MCF 10A (cell line): ENCODE measurements at regions of chr10 and their contacts with region 1.

Region 1: DNA sequence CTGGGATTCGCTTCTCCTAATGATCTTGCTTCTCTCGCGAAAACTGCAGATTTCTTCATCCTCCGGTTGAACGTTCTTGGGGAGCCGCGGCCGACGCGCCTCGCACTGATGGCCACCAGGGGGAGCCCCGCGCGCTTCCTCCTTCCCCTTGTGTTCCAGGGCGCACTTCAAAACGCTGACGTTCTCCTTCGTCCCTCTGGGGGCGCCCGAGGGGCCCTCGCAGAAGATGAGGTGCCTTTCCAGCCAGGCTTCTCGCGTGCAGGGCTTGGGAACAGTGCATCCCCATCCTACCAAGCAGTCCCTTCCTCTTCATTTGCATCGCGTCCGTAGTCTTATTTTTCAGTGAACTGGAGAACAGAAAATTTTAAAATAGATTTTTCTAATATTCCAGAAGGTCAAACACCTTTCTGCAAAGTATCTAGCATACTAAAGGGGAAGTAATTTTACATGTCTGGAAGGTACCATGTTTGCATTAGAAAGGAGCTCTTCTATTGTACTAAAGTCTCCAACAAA is 22.5 kb downstream of the GSTO2 start:
- DNase-seq: peak; percentile 89
- H3K4me3 Mint-ChIP-seq: no peak overlapping the region
- H3K27ac Mint-ChIP-seq: no peak overlapping the region
- H3K4me1 Mint-ChIP-seq: peaks cover 4% of the 10 kb centered on the region
- H3K27me3 Mint-ChIP-seq: no peaks in the 10 kb centered on the region
- CTCF ChIP-seq: peak; percentile 98

Region 2: DNA sequence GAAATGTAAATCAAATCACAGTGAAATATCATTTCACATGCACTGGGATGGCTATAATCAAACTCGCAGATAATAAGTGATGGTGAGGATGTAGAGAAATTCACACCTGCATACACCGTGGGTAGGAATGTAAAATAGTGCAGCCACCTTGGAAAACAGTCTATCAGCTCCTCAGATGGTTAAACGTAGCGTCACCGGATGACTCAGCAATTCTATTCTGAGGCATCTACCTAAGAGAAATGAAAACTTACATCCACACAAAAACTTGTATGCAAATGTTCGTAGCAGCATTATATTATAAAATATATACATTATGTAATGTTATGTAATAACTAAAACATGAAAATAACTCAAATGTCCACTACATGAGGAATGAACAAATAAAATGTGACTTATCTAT is 475.1 kb before region 1 on chr10:
- CTCF ChIA-PET with region 1: no interaction called
- POLR2A ChIA-PET with region 1: no interaction called
- intact Hi-C with region 1: no loop called
- DNase-seq: peak; percentile 51
- H3K4me3 Mint-ChIP-seq: no peak overlapping the region
- H3K27ac Mint-ChIP-seq: no peak overlapping the region
- H3K4me1 Mint-ChIP-seq: no peaks in the 10 kb centered on the region
- H3K27me3 Mint-ChIP-seq: no peaks in the 10 kb centered on the region
- CTCF ChIP-seq: no peak

Region 3: DNA sequence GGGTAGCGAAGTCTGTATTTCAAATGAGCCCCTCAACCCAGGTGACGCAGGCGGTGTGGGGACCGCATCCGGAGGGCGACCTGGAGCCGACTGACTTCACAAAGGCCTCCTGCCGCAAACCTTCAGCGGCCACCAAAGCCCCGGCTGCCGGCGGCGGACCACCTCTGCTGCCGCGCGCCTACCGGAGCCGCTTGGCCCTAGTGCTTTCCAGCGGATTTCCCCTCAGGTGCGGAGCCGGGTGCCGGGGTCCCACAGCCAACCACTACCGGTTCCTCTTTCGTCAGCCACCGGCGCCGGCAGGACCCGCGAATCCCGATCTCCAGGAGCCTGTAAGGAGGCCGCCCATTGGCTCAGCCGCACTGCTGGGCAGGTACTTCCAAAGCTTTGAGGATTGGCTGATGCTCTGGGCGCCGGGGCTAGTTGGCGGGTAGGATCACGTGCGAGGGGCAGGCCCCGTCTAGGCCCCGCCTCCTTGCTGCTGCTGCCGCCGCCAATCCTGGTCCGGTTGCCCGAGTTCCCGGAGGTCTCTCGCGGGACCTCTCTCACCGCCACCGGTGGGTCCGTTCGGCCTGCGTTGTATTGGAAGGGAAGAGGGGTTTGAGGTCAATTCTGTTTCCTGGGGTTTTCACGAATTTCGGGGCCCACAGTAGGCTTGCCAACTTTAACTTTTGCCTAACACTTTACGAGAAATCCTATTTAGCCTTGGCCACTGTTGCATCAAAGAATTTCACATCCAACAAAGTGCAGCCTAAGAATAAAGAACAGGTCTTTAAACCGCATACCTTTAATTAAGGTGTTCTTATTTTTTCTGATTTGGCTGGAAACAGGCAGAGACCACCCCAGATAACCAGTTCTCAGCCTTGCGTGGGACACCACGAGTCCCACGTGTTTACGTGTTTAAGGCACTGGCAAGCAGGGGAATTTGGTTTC is 22.5 kb before region 1 on chr10 and contains the start of gene GSTO2:
- CTCF ChIA-PET with region 1: interaction called, 316 read pairs
- POLR2A ChIA-PET with region 1: interaction called, 4 read pairs
- intact Hi-C with region 1: no loop called
- DNase-seq: peak; percentile 97
- H3K4me3 Mint-ChIP-seq: peak within 1 kb of the TSS; percentile 85
- H3K27ac Mint-ChIP-seq: peak within 1 kb of the TSS; percentile 92
- H3K4me1 Mint-ChIP-seq: peaks cover 8% of the 10 kb centered on the region
- H3K27me3 Mint-ChIP-seq: no peaks in the 10 kb centered on the region
- CTCF ChIP-seq: no peak
- total RNA-seq, gene GSTO2: 33.8 and 40.9 TPM in 2 replicates

Region 4: DNA sequence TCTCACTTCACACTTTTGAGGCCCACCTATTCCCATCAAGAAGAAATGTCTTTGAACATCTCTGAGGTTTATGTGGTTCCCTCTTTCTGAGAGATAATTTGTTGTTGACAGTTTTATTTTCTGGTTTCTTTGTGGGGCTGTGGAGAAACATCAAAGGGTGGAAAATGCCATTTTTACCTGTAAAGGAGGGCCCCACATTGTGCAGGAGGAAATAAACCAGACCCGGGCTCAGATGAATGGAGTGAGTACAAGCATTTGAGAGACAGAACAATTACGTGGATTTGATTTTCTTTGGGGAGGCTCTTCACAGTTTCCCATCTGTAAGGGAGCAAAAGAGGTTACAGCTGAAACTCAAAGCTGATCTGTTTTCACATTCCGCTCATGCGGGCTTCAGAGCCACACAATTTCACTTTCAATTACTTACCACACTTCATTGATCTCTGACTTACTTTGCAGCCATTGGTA is 17.0 kb after region 1 on chr10:
- CTCF ChIA-PET with region 1: interaction called, 165 read pairs
- POLR2A ChIA-PET with region 1: interaction called, 6 read pairs
- intact Hi-C with region 1: no loop called
- DNase-seq: no peak
- H3K4me3 Mint-ChIP-seq: no peak overlapping the region
- H3K27ac Mint-ChIP-seq: peak overlapping the region; percentile 37
- H3K4me1 Mint-ChIP-seq: peaks cover 30% of the 10 kb centered on the region
- H3K27me3 Mint-ChIP-seq: no peaks in the 10 kb centered on the region
- CTCF ChIP-seq: no peak

Region 5: DNA sequence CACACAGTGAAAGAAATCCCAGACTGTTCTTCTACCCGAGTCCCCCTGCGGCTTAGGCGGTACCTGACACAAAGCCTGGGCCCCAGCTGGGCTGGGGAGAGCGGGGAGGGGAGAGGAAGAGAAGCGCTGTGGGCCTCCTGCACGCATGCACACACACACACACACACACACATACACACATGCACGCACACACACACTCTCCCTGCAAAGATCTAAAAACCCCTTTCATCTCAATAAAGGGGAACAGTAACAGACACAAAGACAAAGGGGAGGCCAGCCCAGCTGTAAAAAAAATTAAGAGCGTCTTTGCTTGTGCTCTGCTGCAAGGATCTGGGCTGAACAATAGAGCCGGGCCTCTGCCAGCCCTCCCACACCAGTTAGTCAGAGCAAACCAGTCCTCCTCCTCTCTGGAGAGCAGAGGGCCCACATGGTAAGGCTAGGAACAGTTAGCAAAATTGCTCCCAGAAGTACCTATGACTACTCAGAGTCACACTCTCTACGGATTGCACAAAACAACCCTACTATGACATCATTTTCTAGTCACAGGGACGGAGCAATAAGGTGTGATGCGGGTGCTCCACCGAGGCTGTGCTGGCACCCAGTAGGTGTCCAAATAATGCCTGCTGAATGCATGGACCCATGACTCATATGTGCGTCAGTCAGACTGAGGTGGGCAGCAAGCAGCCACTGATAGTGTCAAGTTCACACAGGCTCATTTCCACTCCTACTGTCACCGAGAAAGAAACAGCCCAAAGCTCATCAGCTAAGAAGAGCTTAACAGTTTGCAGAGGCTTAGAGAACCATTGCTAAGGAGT is 37.6 kb after region 1 on chr10:
- CTCF ChIA-PET with region 1: interaction called, 79 read pairs
- POLR2A ChIA-PET with region 1: interaction called, 6 read pairs
- intact Hi-C with region 1: no loop called
- DNase-seq: peak; percentile 97
- H3K4me3 Mint-ChIP-seq: peak overlapping the region; percentile 64
- H3K27ac Mint-ChIP-seq: peak overlapping the region; percentile 95
- H3K4me1 Mint-ChIP-seq: peaks cover 73% of the 10 kb centered on the region
- H3K27me3 Mint-ChIP-seq: no peaks in the 10 kb centered on the region
- CTCF ChIP-seq: no peak

Region 6: DNA sequence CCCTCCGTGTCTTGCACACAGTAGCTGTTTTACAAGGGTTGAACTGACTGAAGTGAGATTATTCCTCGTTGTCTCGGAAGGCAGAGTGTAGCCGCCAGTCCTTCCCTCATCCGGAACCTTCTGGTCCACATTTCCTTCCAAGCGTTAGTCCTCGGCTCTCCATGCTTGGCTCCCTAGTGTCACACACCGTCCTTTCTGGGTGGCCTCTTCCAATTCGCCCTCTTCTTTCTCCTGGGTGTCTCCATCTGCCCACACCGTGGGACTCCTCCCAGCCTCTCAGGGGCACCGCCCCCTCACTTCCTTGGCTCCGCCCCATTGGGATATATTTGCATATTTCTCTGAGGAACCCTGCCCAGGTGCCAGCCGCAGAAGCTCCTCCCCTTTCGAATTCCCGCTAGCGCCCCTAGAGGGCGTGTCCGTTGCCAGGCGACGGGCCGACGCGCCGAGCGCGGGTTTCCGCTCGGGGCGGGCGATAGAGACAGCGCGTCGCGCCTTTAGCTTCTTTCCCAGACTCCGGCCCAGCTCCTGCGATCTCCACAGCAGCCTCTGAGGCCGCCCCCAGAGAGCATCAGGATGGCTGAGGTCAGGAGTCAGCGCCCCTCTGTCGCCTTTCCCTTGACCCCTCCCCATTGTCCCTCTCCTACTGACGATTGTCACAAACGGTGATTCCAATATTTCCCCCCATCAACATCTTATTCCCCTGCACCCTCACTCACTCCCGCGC is 62.0 kb after region 1 on chr10 and contains the start of gene CFAP58:
- CTCF ChIA-PET with region 1: interaction called, 406 read pairs
- POLR2A ChIA-PET with region 1: interaction called, 18 read pairs
- intact Hi-C with region 1: loop called (anchors 1 kb)
- DNase-seq: peak; percentile 95
- H3K4me3 Mint-ChIP-seq: no peak within 1 kb of the TSS
- H3K27ac Mint-ChIP-seq: no peak within 1 kb of the TSS
- H3K4me1 Mint-ChIP-seq: peaks cover 13% of the 10 kb centered on the region
- H3K27me3 Mint-ChIP-seq: no peaks in the 10 kb centered on the region
- CTCF ChIP-seq: peak; percentile 41
- total RNA-seq, gene CFAP58: 0.89 and 1.1 TPM in 2 replicates

Region 7: DNA sequence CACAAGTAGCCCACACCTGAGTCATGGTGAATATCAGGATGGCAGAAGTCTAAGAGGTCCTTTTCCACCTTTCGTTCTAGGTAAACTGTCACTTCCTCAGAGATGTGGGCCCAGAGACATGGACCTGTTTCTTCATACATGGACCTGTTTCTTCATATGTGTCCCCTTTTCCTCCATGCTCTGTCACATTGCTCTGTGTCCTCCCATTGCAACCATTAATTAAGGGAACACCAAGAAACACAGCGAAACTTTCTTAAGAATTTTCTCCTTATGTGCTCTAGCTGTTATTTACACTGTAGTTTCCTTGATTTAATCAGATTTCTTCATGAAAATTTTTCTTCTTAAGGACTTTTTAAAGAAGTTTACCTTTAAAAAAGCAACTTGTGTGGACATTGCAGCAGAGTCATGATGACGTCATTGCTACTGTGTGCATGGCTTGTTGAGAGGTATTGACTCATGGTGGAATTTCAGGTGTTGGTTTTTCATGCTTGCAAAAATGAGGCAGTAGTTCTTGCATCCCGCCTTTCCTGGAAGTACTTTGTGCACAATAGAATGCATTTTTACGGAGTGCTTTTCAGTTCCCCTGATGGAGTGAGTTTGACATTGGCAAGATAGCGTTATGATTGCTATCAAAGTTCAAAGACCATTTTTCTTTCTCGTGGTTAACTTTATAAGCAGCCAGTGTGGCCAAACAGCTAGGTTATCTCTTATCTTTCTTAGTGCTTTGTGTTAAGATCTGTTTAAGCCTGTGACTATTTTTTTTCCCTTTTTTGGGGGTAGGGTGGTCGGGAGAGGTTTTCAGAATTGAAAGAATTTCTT is 99.9 kb after region 1 on chr10:
- CTCF ChIA-PET with region 1: interaction called, 12 read pairs
- POLR2A ChIA-PET with region 1: no interaction called
- intact Hi-C with region 1: no loop called
- DNase-seq: peak; percentile 69
- H3K4me3 Mint-ChIP-seq: no peak overlapping the region
- H3K27ac Mint-ChIP-seq: no peak overlapping the region
- H3K4me1 Mint-ChIP-seq: peaks cover 9% of the 10 kb centered on the region
- H3K27me3 Mint-ChIP-seq: no peaks in the 10 kb centered on the region
- CTCF ChIP-seq: no peak